PC-9 (cell line): ENCODE measurements at regions of chr10 and their contacts with region 1.

Region 1: DNA sequence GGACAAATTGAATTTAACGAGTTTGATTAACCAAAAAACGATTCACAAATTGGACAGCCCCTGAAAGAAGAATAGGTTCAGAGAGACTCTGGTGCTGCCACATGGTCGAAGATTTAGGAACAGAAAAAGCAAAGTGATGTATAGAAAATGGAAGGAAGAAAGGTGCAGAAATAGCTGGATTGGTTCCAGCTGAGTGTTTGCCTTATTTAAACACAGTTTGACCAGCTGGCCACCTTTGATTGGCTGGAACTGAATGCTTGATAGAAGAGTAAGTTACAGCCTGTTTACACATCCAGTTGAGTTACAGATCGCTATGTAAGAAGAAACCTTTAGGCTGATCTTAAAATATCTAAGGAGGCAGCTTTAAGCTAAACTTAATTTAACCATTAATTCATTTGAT is 40.3 kb upstream of the KAT6B start:
- DNase-seq: no peak
- H3K4me3 ChIP-seq: no peak overlapping the region
- H3K27ac ChIP-seq: no peak overlapping the region
- H3K4me1 ChIP-seq: no peaks in the 10 kb centered on the region
- H3K27me3 ChIP-seq: no peaks in the 10 kb centered on the region
- CTCF ChIP-seq: no peak

Region 2: DNA sequence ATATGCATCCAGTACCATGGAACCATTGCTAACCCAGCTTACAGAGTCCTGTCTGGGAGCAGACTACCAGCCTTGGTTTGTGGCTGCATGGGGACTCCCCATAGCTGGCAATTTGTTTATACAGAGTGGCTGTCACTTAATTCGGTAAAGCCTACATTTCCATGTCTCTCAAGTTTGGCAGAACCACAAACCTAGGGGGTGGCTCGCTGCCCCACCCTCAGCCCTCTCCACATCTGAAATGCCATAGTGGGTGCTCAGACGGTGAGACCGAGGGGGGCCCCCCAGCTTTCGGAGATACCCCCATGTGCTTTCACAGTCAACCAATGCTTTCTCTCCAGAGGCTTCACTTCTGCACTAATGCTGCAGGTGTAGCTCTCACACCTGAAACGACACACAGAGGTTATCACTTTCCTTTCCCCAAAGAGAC is 35.2 kb before region 1 on chr10:
- CTCF ChIA-PET with region 1: no interaction called
- POLR2A ChIA-PET with region 1: no interaction called
- intact Hi-C with region 1: no loop called
- DNase-seq: no peak
- H3K4me3 ChIP-seq: no peak overlapping the region
- H3K27ac ChIP-seq: no peak overlapping the region
- H3K4me1 ChIP-seq: no peaks in the 10 kb centered on the region
- H3K27me3 ChIP-seq: no peaks in the 10 kb centered on the region
- CTCF ChIP-seq: no peak

Region 3: GRCh38 chr10:74771054-74771453 is 15.0 kb before region 1 on chr10:
- CTCF ChIA-PET with region 1: no interaction called
- POLR2A ChIA-PET with region 1: interaction called, 30 read pairs
- intact Hi-C with region 1: no loop called
- DNase-seq: no peak
- H3K4me3 ChIP-seq: no peak overlapping the region
- H3K27ac ChIP-seq: no peak overlapping the region
- H3K4me1 ChIP-seq: peaks cover 7% of the 10 kb centered on the region
- H3K27me3 ChIP-seq: no peaks in the 10 kb centered on the region
- CTCF ChIP-seq: no peak

Region 4: DNA sequence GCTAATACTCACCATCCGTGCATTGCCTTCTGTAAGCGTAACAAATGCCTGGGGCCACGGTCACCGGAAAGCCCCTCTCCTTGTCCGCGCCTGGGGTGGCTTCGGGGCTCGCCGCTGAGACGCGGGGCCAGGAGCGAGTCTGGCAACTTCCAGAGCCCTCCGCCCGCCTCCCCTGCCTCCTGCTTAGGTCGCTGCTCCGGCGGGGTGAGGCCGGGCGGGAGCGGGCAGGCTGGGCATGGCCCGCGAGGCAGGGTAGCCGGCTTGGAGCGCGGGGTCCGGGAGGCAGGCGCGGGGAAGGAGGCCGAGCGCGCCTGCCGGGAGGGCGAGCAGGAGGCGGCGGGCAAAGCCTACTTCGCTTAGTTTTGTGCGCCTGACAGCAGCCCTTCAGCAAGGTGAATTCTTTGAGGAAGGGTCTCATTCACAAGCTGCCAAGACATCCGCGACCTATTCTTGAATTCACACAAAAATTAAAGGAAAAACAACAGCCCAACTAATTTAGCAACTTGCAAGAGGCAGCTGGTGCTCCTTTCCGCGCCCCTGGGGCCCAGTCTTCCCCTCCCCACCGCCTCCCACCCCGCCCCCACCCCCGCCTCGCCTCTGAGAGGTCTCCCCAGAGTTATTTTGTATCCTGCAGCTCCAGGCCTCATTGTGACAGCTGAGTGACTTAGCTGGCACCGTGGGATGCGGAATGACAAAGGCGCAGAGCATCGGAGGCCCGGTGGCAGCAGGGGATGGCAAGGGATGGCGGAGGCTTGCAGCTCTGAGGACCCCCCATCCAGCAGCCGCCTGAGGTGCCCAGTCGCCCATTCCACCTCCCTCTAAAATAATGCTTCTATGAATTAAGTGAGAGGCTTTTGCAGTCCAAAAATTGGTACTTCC is 27.5 kb after region 1 on chr10:
- CTCF ChIA-PET with region 1: no interaction called
- POLR2A ChIA-PET with region 1: no interaction called
- intact Hi-C with region 1: no loop called
- DNase-seq: no peak
- H3K4me3 ChIP-seq: no peak overlapping the region
- H3K27ac ChIP-seq: no peak overlapping the region
- H3K4me1 ChIP-seq: no peaks in the 10 kb centered on the region
- H3K27me3 ChIP-seq: no peaks in the 10 kb centered on the region
- CTCF ChIP-seq: no peak

Region 5: GRCh38 chr10:74841265-74841973 is 55.3 kb after region 1 on chr10:
- CTCF ChIA-PET with region 1: no interaction called
- POLR2A ChIA-PET with region 1: interaction called, 17 read pairs
- intact Hi-C with region 1: no loop called
- DNase-seq: no peak
- H3K4me3 ChIP-seq: no peak overlapping the region
- H3K27ac ChIP-seq: no peak overlapping the region
- H3K4me1 ChIP-seq: no peaks in the 10 kb centered on the region
- H3K27me3 ChIP-seq: no peaks in the 10 kb centered on the region
- CTCF ChIP-seq: no peak

Region 6: GRCh38 chr10:74851831-74852230 is 65.7 kb after region 1 on chr10:
- CTCF ChIA-PET with region 1: no interaction called
- POLR2A ChIA-PET with region 1: no interaction called
- intact Hi-C with region 1: no loop called
- DNase-seq: no peak
- H3K4me3 ChIP-seq: no peak overlapping the region
- H3K27ac ChIP-seq: no peak overlapping the region
- H3K4me1 ChIP-seq: no peaks in the 10 kb centered on the region
- H3K27me3 ChIP-seq: no peaks in the 10 kb centered on the region
- CTCF ChIP-seq: no peak